AG04450 (cell line): ENCODE measurements at regions of chr14 and their contacts with region 1.

Region 1: GRCh38 chr14:75982266-75983018 is 647 bp upstream of the TGFB3 start:
- DNase-seq: peak; percentile 50
- H3K4me3 ChIP-seq: peak overlapping the region; percentile 66
- H3K27ac ChIP-seq: peak overlapping the region; percentile 74
- H3K27me3 ChIP-seq: peaks cover 3% of the 10 kb centered on the region
- CTCF ChIP-seq: peak; percentile 65

Region 2: GRCh38 chr14:75702616-75703261 is 279.7 kb before region 1 on chr14:
- CTCF ChIA-PET with region 1: interaction called, 484 read pairs
- POLR2A ChIA-PET with region 1: no interaction called
- DNase-seq: no peak
- H3K4me3 ChIP-seq: no peak overlapping the region
- H3K27ac ChIP-seq: no peak overlapping the region
- H3K27me3 ChIP-seq: no peaks in the 10 kb centered on the region
- CTCF ChIP-seq: no peak

Region 3: DNA sequence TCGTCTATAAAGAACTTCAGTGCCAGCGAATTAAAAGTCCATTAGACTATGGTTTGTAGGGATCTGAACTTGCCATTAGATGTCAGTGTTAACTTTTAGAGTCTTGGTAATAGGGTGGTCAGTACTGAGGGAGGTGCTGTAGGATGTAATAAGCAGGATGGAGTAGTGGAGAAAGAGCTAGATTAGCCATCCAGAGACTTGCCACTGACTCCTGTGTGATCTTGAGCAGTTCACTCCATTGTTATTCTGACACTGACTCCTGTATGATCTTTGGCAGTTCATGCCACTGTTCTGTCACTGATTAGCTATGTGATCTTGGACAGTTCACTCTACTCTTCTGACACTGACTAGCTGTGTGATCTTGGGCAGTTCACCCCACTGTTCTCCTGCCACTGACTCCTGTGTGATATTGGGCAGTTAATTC is 187.8 kb before region 1 on chr14:
- CTCF ChIA-PET with region 1: interaction called, 105 read pairs
- POLR2A ChIA-PET with region 1: interaction called, 16 read pairs
- DNase-seq: peak; percentile 33
- H3K4me3 ChIP-seq: no peak overlapping the region
- H3K27ac ChIP-seq: no peak overlapping the region
- H3K27me3 ChIP-seq: no peaks in the 10 kb centered on the region
- CTCF ChIP-seq: peak; percentile 68

Region 4: DNA sequence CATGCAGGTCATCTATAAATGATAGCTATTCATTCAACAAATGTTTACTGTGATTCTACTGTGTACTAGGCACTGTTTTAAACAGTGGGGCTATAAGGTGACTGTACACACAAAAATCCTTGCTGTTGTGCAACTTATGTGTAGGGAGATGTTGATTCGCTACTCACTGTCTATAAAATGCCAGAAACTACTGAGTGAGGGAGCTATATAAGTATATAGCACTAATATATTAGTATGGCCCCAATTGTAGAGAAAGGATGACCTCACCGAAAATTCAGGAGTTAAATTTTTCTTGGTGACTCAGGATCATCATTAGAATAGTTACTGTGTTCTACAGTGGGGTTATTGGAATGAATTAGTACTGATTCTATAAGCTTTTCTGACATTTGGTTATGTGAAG is 118.1 kb before region 1 on chr14:
- CTCF ChIA-PET with region 1: interaction called, 10 read pairs
- POLR2A ChIA-PET with region 1: interaction called, 8 read pairs
- DNase-seq: peak; percentile 55
- H3K4me3 ChIP-seq: no peak overlapping the region
- H3K27ac ChIP-seq: no peak overlapping the region
- H3K27me3 ChIP-seq: no peaks in the 10 kb centered on the region
- CTCF ChIP-seq: no peak

Region 5: GRCh38 chr14:75969860-75970259 is 12.6 kb before region 1 on chr14:
- CTCF ChIA-PET with region 1: interaction called, 10 read pairs
- POLR2A ChIA-PET with region 1: no interaction called
- DNase-seq: no peak
- H3K4me3 ChIP-seq: no peak overlapping the region
- H3K27ac ChIP-seq: no peak overlapping the region
- H3K27me3 ChIP-seq: no peaks in the 10 kb centered on the region
- CTCF ChIP-seq: no peak

Region 6: DNA sequence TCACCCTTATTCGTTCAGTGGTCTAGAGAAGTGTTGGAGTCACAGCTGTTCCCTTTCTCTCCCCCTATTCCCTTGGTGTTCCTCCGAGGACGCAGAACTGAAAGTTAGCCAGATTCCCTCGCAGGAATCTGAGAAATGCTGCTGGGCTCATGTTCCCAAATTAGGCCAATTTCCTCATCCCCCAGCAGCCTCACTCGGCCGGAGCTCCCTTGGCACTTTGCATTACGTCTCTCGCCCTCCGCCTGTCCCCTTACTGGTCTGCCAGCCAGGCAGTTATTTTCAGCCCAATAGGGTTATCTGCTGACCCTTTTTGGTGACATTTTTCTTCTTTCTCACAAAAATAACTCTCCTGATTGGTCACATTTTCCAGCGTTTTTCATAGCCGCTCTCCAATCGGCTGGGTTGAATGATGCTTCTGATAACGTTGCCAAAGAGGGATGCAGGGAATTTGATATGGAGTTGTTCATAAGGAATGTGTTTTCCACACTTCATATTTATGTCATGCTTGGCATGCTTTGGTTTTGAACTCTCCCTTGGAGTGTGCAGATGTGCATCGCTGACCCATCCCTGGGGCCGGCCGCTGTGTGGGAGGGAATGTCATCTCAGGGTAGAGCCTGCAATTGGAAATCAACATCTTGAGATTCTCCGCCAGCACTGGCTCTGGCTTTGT is 13.1 kb after region 1 on chr14:
- CTCF ChIA-PET with region 1: interaction called, 25 read pairs
- POLR2A ChIA-PET with region 1: interaction called, 3 read pairs
- DNase-seq: peak; percentile 80
- H3K4me3 ChIP-seq: peak overlapping the region; percentile 34
- H3K27ac ChIP-seq: peak overlapping the region; percentile 92
- H3K27me3 ChIP-seq: no peaks in the 10 kb centered on the region
- CTCF ChIP-seq: no peak

Region 7: DNA sequence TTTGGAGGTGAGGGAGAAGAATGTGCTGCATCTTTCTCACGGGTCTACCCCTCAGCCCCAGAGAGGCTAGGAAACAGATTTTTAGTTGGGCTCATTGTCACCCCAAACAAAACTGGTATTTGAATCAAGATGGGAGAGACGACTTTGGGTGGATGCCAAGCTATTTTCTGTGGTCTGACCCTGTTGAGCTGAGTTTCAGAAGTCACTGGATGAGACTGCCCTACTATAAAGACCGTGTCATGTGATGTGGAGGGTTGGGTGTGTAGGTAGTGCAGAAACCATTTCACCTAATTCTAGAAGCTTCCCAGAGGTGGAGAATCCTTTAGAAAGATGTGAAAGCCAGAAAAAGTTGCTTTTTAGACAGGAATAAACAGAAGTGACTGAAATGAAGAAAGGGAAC is 63.3 kb after region 1 on chr14:
- CTCF ChIA-PET with region 1: no interaction called
- POLR2A ChIA-PET with region 1: no interaction called
- DNase-seq: no peak
- H3K4me3 ChIP-seq: no peak overlapping the region
- H3K27ac ChIP-seq: no peak overlapping the region
- H3K27me3 ChIP-seq: no peaks in the 10 kb centered on the region
- CTCF ChIP-seq: no peak

Region 8: GRCh38 chr14:76151398-76152339 is 169.2 kb after region 1 on chr14 and contains the start of gene GPATCH2L:
- CTCF ChIA-PET with region 1: no interaction called
- POLR2A ChIA-PET with region 1: no interaction called
- DNase-seq: peak; percentile 61
- H3K4me3 ChIP-seq: peak within 1 kb of the TSS; percentile 96
- H3K27ac ChIP-seq: peak within 1 kb of the TSS; percentile 94
- H3K27me3 ChIP-seq: peaks cover 7% of the 10 kb centered on the region
- CTCF ChIP-seq: no peak
- polyA plus RNA-seq, gene GPATCH2L: 29.5 and 32.2 TPM in 2 replicates

Region 9: DNA sequence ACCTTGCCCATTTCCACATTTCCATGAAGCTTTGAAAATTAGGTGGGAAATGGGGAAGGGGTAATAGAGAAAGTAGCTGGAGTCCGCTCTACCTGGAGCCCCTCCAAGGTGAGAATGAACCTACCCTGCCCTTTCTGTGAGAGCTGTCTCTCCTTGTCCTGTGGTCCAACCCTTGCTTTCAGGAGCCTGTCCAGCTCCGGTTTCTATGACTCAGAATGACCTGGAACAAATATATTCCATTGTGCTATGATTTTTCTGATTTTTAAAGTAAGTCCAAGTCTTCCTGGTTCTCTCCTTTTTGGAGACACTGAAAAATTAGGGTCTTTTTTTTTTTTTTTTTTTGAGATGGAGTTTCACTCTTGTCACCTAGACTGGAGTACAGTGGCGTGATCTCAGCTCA is 689.7 kb after region 1 on chr14:
- CTCF ChIA-PET with region 1: no interaction called
- POLR2A ChIA-PET with region 1: no interaction called
- DNase-seq: no peak
- H3K4me3 ChIP-seq: no peak overlapping the region
- H3K27ac ChIP-seq: no peak overlapping the region
- H3K27me3 ChIP-seq: peaks cover 4% of the 10 kb centered on the region
- CTCF ChIP-seq: no peak